ENCODE measurements at regions of chr1 and their contacts with region 1.

Region 1: GRCh38 chr1:224329842-224330753 is at the start of gene NVL:
- DNase-seq: peak; percentile 85
- ATAC-seq: peak; percentile 98
- total RNA-seq, gene NVL: 10.7 to 11.8 TPM

Region 2: GRCh38 chr1:224113918-224114786 is 215.9 kb before region 1 on chr1 and contains the start of gene FBXO28:
- intact Hi-C with region 1: loop called (anchors 2 to 5 kb)
- DNase-seq: peak; percentile 96
- ATAC-seq: peak; percentile 100
- total RNA-seq, gene FBXO28: 17.3 to 20.1 TPM

Region 3: GRCh38 chr1:224170365-224171112 is 159.6 kb before region 1 on chr1:
- intact Hi-C with region 1: loop called in 1 of 2 experiments (anchors 5 kb)
- DNase-seq: no peak
- ATAC-seq: peak; percentile 6 to 45

Region 4: DNA sequence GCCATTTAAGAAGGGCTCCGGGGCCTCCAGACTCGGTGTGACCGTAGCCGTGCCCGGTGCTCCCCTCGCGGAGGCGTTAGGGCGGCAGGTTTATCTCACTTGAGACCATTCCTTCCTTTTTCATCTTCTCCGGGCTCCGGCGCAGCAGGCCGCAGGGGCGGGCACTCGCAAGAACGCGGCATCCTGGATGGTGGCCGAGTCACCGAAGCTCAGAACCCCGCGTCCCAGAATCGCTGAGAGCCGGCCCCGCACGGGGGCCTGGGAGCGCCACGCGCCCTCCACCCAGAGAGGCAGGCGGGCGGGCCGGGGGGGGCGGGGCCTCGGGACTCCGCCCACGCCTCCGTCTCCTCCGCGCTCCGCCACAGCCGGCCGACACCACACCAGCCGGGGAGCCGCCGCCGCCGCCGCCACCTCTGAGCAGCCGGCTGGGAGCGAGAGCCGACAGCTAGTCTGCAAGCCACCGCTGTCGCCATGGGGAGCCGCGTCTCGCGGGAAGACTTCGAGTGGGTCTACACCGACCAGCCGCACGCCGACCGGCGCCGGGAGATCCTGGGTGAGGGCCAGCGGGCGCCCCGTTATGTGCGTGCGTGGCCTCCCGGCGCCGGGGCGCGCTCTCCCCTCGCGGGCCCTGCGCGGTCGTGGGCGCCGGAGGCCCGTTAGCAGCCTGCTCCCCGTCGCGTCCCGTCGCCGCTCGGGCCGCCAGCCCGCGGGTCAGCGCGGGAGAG is 147.1 kb before region 1 on chr1 and contains the start of gene DEGS1:
- intact Hi-C with region 1: loop called in 1 of 2 experiments (anchors 10 kb)
- DNase-seq: peak; percentile 82
- ATAC-seq: peak; percentile 95 to 97
- total RNA-seq, gene DEGS1: 59.2 to 64.9 TPM